Heart right ventricle (tissue), 16 donors: ENCODE measurements at regions of chr2 and their contacts with region 1.

Region 1: GRCh38 chr2:223957092-223957851 is at the start of gene MRPL44:
- DNase-seq: peak; percentile 97
- ATAC-seq: peak; percentile 100
- H3K4me3 ChIP-seq: peak within 1 kb of the TSS; percentile 83 to 100 (median 96)
- H3K27ac ChIP-seq: peak within 1 kb of the TSS; percentile 47 to 93 (median 86)
- H3K4me1 ChIP-seq: peaks cover 13 to 55% (median 50%) of the 10 kb centered on the region in 9 donors
- H3K27me3 ChIP-seq: no peaks in the 10 kb centered on the region
- CTCF ChIP-seq: peak in 2 of 9 donors; percentile 5 to 27
- total RNA-seq, gene MRPL44: 34.4 to 47.5 (median 41.5) TPM

Region 2: DNA sequence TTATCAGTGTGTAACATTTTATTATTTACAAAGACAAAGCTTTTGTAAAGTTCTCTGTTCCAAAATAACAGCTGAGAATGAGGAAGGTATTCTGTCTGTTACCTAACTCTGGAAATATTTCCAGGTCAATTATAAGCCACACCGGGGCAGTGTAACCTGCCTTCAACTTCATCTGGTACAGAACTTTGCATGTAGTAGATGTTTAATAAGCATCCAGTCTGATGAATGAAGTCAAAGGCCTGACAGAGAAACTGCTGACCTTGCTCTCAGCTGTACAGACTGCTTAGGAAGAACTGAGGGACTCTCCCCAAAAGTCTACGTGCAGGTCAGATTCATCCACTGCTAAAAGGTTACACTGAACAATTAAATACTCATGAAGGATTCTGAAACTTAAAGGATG is 55.4 kb before region 1 on chr2:
- intact Hi-C with region 1: loop called in 1 of 10 experiments (anchors 10 kb)
- DNase-seq: no peak
- ATAC-seq: no peak
- H3K4me3 ChIP-seq: no peak overlapping the region
- H3K27ac ChIP-seq: no peak overlapping the region
- H3K4me1 ChIP-seq: peaks cover 0 to 8% (median 0%) of the 10 kb centered on the region in 9 donors
- H3K27me3 ChIP-seq: no peaks in the 10 kb centered on the region
- CTCF ChIP-seq: peak in 2 of 9 donors; percentile 8 to 10